Endothelial cell of umbilical vein (primary cell): ENCODE measurements at regions of chr16 and their contacts with region 1.

Region 1: DNA sequence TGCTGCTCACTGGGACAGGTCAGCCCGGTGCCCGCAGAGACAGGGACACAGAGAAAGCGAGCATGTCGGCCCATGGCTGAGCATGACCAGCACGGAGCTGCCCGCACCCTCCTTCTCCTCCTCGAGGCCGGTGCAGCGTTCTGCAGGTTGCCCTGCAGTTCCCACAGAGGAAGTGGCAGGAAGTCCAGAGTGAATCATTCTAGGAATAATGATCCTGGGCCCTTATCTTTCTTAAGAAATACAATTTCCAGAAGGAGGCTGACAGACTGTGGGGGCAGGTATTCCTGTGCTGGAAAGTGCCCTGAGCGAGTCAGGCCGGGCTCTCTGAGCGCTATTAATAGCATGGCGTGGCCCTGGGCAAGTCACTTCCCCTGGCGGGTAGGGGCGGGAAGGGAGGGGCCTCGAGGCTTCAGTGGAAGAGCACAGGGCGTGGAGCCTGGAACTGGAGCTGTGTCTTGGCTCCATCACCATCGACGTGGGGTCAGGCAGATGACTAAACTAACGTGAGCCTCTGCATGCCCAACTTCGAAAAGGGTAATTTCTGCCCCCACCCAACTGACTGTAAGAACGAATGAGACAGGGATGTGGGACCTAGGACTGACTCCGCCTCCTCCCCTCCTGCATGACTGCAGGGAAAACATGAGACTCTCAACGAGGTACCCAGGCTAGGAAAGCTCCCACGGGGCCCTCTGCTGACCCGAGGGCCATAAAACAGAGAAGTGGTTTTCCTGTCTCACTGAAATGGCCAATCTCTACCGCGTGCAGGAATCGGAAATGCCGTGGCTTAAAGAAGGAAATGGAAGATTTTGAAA is 9.8 kb downstream of the TMEM204 start:
- DNase-seq: peak; percentile 92
- H3K4me3 ChIP-seq: no peak overlapping the region
- H3K27ac ChIP-seq: peak overlapping the region; percentile 98
- H3K4me1 ChIP-seq: peaks cover 51% of the 10 kb centered on the region
- H3K27me3 ChIP-seq: no peaks in the 10 kb centered on the region
- CTCF ChIP-seq: peak; percentile 23 to 26
- POLR2A ChIP-seq: no peak

Region 2: DNA sequence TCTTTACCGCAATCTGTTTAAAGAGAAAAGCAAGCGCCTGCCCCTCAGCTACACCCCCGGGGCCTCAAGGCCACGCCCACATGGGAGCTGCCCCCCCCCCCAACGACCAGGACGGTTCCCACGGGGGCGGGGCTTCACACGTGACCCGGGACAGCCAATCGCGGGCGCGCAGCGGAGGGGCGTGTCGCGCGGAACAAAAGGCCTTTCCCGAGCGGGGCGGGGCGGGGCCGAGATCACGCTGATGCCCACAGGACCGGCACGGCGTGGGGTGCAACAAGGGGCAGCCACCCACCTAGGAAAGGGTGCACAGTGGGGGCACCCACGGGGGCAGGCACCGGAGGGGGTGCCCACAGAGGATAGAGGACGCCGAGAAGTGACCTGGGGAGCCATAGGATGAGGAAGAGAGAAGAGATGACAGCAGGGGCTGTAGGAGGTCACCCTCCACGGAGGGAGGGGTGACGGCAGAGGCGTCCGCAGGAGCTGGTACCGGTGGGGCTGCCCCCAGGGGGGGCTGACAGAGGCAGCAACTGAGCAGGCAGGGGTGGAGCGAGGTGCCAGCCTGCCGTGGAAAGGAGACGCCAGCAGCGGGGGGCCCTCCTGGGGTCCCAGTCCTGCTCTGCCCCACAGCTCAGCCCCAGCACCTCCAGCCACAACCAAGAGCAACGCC is 135.0 kb before region 1 on chr16:
- CTCF ChIA-PET with region 1: no interaction called
- POLR2A ChIA-PET with region 1: no interaction called
- dilution Hi-C with region 1: no loop called
- intact Hi-C with region 1: loop called (anchors 5 kb)
- DNase-seq: peak; percentile 92
- H3K4me3 ChIP-seq: peak overlapping the region; percentile 35 to 51 (median 46)
- H3K27ac ChIP-seq: no peak overlapping the region
- H3K4me1 ChIP-seq: peaks cover 5% of the 10 kb centered on the region
- H3K27me3 ChIP-seq: no peaks in the 10 kb centered on the region
- CTCF ChIP-seq: no peak
- POLR2A ChIP-seq: no peak

Region 3: GRCh38 chr16:1420111-1420540 is 123.2 kb before region 1 on chr16:
- CTCF ChIA-PET with region 1: no interaction called
- POLR2A ChIA-PET with region 1: no interaction called
- dilution Hi-C with region 1: no loop called
- intact Hi-C with region 1: no loop called
- DNase-seq: no peak
- H3K4me3 ChIP-seq: peak overlapping the region; percentile 44 to 80 (median 68)
- H3K27ac ChIP-seq: peak overlapping the region; percentile 56
- H3K4me1 ChIP-seq: peaks cover 9% of the 10 kb centered on the region
- H3K27me3 ChIP-seq: no peaks in the 10 kb centered on the region
- CTCF ChIP-seq: no peak
- POLR2A ChIP-seq: no peak

Region 4: GRCh38 chr16:1610276-1611017 is 67.2 kb after region 1 on chr16:
- CTCF ChIA-PET with region 1: interaction called, 4 read pairs
- POLR2A ChIA-PET with region 1: interaction called, 3 read pairs
- dilution Hi-C with region 1: no loop called
- intact Hi-C with region 1: loop called (anchors 1 kb)
- DNase-seq: peak; percentile 91
- H3K4me3 ChIP-seq: peak overlapping the region; percentile 48 to 80 (median 61)
- H3K27ac ChIP-seq: peak overlapping the region; percentile 32
- H3K4me1 ChIP-seq: peaks cover 29% of the 10 kb centered on the region
- H3K27me3 ChIP-seq: no peaks in the 10 kb centered on the region
- CTCF ChIP-seq: no peak
- POLR2A ChIP-seq: no peak